Activated CD4-positive, alpha-beta T cell treated with anti-CD3 and anti-CD28 coated beads, Interleukin-2, amount 10 ng/mL, durations not matched to agents 24 days and 14 days (primary cell): ENCODE measurements at regions of chr3 and their contacts with region 1.

Region 1: DNA sequence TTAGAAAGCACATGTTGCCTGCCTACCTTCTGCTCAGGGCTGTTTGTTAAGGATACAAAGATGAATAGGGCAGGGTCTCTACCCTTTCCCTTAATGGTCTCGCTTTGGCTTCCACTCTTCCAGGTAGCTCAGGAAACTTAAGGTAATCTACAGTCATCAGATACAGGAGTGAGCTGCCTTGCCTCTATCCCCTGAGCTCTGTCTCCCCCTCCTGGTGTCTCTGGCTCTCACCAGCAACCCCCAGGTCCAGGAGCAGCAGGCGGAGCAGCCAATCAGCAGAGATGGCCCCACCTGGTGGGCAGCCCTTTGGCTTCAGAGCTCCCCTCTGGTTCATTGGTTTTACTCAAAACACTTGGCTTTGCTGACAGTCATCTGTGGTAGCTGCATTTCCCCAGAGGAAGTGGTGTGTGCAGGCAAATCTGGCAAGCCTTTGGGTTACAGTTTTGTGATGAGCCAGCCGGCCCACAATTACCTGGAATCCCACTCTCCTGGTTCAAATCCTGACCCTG is 8.5 kb upstream of the CX3CR1 start:
- DNase-seq: peak; percentile 95
- H3K4me3 Mint-ChIP-seq: no peak overlapping the region
- H3K27ac Mint-ChIP-seq: no peak overlapping the region
- H3K4me1 Mint-ChIP-seq: peaks cover 41% of the 10 kb centered on the region
- H3K27me3 Mint-ChIP-seq: no peaks in the 10 kb centered on the region

Region 2: GRCh38 chr3:39101022-39101689 is 187.2 kb before region 1 on chr3:
- intact Hi-C with region 1: loop called (anchors 1 kb)
- DNase-seq: peak; percentile 83
- H3K4me3 Mint-ChIP-seq: no peak overlapping the region
- H3K27ac Mint-ChIP-seq: no peak overlapping the region
- H3K4me1 Mint-ChIP-seq: peaks cover 34% of the 10 kb centered on the region
- H3K27me3 Mint-ChIP-seq: no peaks in the 10 kb centered on the region

Region 3: DNA sequence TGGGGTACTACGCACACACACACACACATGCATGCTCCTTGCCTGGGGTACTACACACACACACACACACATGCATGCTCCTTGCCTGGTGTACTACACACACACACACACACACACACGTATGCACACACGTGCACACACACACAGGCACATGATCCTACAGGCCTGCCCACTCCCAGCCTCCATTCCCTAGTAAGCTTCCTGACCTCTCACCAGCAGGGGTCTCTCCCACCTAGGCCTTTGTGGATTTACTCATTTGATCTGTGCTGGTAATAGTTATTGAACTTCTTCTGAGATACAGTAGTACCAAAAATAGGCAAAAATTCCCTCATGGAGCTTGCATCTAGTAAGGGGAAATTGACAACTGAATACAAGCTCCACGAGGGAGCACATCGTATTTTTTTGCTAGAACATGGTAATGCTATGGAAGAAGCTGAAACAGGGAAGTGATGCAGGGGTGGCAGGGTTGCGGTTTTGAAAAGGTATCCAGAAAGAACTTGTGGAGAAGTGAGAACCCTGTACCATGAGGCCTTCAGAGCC is 161.8 kb before region 1 on chr3:
- intact Hi-C with region 1: loop called (anchors 1 kb)
- DNase-seq: peak; percentile 73
- H3K4me3 Mint-ChIP-seq: no peak overlapping the region
- H3K27ac Mint-ChIP-seq: no peak overlapping the region
- H3K4me1 Mint-ChIP-seq: peaks cover 27% of the 10 kb centered on the region
- H3K27me3 Mint-ChIP-seq: peaks cover 2% of the 10 kb centered on the region

Region 4: DNA sequence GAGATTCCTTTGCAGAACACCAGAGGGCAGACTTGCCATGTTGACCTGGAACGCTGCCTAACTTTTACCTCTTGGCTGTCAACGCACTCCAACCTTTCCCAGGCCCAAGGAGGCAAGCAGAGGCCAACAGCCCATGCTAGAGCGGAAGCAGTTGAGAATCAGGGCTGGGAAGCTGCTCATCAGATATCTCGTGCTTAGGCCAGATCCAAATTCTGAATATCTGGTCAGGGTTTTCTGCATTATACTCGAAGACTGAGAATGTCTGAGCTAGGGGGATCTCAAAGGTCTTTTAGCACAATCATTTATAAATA is 98.4 kb before region 1 on chr3:
- intact Hi-C with region 1: loop called (anchors 1 kb)
- DNase-seq: peak; percentile 88
- H3K4me3 Mint-ChIP-seq: no peak overlapping the region
- H3K27ac Mint-ChIP-seq: peak overlapping the region; percentile 49
- H3K4me1 Mint-ChIP-seq: peaks cover 29% of the 10 kb centered on the region
- H3K27me3 Mint-ChIP-seq: no peaks in the 10 kb centered on the region

Region 5: GRCh38 chr3:39208463-39209055 is 79.8 kb before region 1 on chr3:
- intact Hi-C with region 1: loop called (anchors 1 kb)
- DNase-seq: peak; percentile 81
- H3K4me3 Mint-ChIP-seq: no peak overlapping the region
- H3K27ac Mint-ChIP-seq: no peak overlapping the region
- H3K4me1 Mint-ChIP-seq: peaks cover 15% of the 10 kb centered on the region
- H3K27me3 Mint-ChIP-seq: peaks cover 20% of the 10 kb centered on the region

Region 6: GRCh38 chr3:39267631-39268548 is 20.5 kb before region 1 on chr3:
- intact Hi-C with region 1: loop called (anchors 1 kb)
- DNase-seq: peak; percentile 94
- H3K4me3 Mint-ChIP-seq: peak overlapping the region; percentile 73
- H3K27ac Mint-ChIP-seq: peak overlapping the region; percentile 98
- H3K4me1 Mint-ChIP-seq: peaks cover 58% of the 10 kb centered on the region
- H3K27me3 Mint-ChIP-seq: peaks cover 3% of the 10 kb centered on the region

Region 7: DNA sequence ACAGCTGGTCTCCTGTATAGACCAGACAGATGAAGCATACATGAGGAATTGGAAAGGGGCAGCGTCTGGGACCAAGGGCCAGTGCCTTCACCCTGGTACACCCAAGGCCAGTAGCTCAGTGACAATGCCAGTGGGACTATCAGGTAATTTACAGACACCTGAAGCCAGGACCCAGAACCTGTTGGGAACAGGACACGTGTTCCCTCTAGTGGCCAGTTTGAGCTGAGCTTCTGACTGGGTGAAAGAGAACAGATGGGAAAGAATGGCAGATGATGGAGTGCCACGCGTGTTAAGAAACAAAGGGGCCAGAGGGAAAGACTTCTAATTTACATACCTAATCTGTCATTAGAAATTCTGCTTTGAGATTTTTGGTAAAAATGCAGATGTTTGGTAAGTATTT is 89.7 kb after region 1 on chr3:
- intact Hi-C with region 1: loop called (anchors 1 kb)
- DNase-seq: peak; percentile 91
- H3K4me3 Mint-ChIP-seq: no peak overlapping the region
- H3K27ac Mint-ChIP-seq: no peak overlapping the region
- H3K4me1 Mint-ChIP-seq: peaks cover 18% of the 10 kb centered on the region
- H3K27me3 Mint-ChIP-seq: no peaks in the 10 kb centered on the region

Region 8: DNA sequence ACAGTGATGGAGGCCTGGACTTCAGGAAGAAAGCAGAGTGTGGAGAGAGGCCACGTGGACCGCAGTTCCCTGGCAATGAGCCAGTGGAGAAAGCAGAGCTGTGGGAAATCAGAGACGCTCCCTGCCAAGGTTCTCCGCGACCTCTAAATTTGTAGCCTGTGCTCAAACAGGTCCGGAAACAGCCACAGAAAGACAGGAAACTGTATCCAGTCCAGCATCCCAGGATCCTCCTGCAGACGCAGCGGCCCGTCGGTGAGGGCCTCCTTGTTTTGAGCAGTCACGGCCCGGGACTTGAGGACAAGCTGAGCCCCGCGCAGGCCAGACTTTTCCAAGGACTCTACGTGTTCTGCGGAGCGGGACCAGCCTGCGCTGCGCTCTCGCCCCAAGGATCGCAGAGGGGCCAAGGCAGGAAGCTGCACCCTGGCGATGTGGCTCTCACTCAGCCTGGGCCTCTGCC is 140.4 kb after region 1 on chr3:
- intact Hi-C with region 1: no loop called
- DNase-seq: no peak
- H3K4me3 Mint-ChIP-seq: no peak overlapping the region
- H3K27ac Mint-ChIP-seq: no peak overlapping the region
- H3K4me1 Mint-ChIP-seq: no peaks in the 10 kb centered on the region
- H3K27me3 Mint-ChIP-seq: peaks cover 5% of the 10 kb centered on the region